A673 (cell line): ENCODE measurements at regions of chr1 and their contacts with region 1.

Region 1: GRCh38 chr1:27300341-27301051 is 21.5 kb upstream of the TMEM222 start:
- DNase-seq: peak; percentile 92
- H3K4me3 ChIP-seq: no peak overlapping the region
- H3K27ac ChIP-seq: no peak overlapping the region
- H3K4me1 ChIP-seq: peaks cover 4% of the 10 kb centered on the region
- H3K27me3 ChIP-seq: no peaks in the 10 kb centered on the region
- CTCF ChIP-seq: peak; percentile 96

Region 2: DNA sequence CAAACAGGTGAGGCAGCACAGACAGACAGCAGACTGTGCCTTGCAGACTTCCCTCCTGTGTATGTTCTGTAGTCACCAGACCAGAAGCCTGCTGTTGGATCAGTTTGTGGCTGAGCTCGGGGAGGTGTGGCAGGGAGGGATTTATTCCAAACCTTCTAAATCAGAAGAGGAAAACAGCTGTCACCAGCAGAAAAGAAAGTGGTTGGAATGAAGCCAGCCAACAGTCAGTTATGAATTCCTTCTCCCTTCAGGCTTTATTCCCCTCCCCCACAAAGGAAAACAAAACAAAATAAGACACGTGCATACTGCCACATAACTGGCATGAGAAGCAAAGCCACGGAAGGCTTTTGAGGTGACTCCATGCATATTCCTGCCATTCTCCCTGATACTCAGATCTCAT is 531.7 kb before region 1 on chr1:
- CTCF ChIA-PET with region 1: interaction called, 11 read pairs
- POLR2A ChIA-PET with region 1: no interaction called
- intact Hi-C with region 1: no loop called
- DNase-seq: peak; percentile 58
- H3K4me3 ChIP-seq: no peak overlapping the region
- H3K27ac ChIP-seq: peak overlapping the region; percentile 41
- H3K4me1 ChIP-seq: peaks cover 22% of the 10 kb centered on the region
- H3K27me3 ChIP-seq: no peaks in the 10 kb centered on the region
- CTCF ChIP-seq: no peak

Region 3: GRCh38 chr1:27102707-27103491 is 197.6 kb before region 1 on chr1:
- CTCF ChIA-PET with region 1: interaction called, 15 read pairs
- POLR2A ChIA-PET with region 1: no interaction called
- intact Hi-C with region 1: no loop called
- DNase-seq: peak; percentile 74
- H3K4me3 ChIP-seq: no peak overlapping the region
- H3K27ac ChIP-seq: no peak overlapping the region
- H3K4me1 ChIP-seq: peaks cover 16% of the 10 kb centered on the region
- H3K27me3 ChIP-seq: no peaks in the 10 kb centered on the region
- CTCF ChIP-seq: peak; percentile 96

Region 4: GRCh38 chr1:27341525-27342252 is 41.2 kb after region 1 on chr1 and contains the start of gene SYTL1:
- CTCF ChIA-PET with region 1: interaction called, 18 read pairs
- POLR2A ChIA-PET with region 1: no interaction called
- intact Hi-C with region 1: no loop called
- DNase-seq: peak; percentile 65
- H3K4me3 ChIP-seq: peak within 1 kb of the TSS; percentile 30
- H3K27ac ChIP-seq: peak within 1 kb of the TSS; percentile 19
- H3K4me1 ChIP-seq: peaks cover 12% of the 10 kb centered on the region
- H3K27me3 ChIP-seq: no peaks in the 10 kb centered on the region
- CTCF ChIP-seq: no peak
- total RNA-seq, gene SYTL1: 2.1 and 3.6 TPM in 2 replicates

Region 5: GRCh38 chr1:27392096-27392777 is 91.7 kb after region 1 on chr1 and contains the start of gene GPR3:
- CTCF ChIA-PET with region 1: interaction called, 21 read pairs
- POLR2A ChIA-PET with region 1: no interaction called
- intact Hi-C with region 1: loop called (anchors 2 kb)
- DNase-seq: peak; percentile 96
- H3K4me3 ChIP-seq: peak within 1 kb of the TSS; percentile 81
- H3K27ac ChIP-seq: peak within 1 kb of the TSS; percentile 80
- H3K4me1 ChIP-seq: peaks cover 12% of the 10 kb centered on the region
- H3K27me3 ChIP-seq: no peaks in the 10 kb centered on the region
- CTCF ChIP-seq: peak; percentile 82
- total RNA-seq, gene GPR3: 3.1 and 4.9 TPM in 2 replicates

Region 6: DNA sequence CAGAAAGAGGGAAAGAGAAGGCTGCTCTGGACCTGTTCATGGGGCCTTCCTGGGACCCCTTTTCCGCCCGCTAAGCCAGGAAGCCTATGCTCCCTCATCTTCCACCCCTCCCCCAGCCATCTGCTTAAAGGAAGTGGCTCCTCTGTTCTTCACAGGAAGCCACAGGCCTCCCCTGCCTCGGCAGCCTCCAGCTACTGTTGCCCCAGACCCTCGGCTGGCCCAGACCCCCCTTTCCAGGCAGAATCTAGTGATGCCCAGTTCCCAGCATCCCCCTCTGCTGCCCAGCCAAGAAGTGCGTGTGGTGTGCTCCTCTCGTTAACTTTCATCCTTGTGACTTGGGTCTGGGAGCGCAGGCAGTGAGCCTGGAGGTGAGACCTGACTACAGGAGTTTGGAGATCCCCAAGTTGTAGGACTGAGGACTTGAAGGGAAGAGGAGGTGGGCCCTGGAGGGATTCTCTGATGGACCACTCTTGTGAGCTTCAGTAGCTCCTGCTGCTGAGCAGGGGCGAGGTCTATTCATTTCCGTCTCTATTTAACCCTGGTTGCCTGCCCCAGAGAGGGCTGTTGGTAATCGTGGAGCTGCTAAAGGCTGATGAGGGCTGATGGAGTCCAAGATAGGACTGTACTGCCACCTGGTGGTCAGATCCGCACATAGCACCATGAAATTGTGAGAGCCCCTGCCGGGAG is 362.4 kb after region 1 on chr1:
- CTCF ChIA-PET with region 1: interaction called, 13 read pairs
- POLR2A ChIA-PET with region 1: no interaction called
- intact Hi-C with region 1: loop called (anchors 2 kb)
- DNase-seq: peak; percentile 89
- H3K4me3 ChIP-seq: no peak overlapping the region
- H3K27ac ChIP-seq: peak overlapping the region; percentile 4
- H3K4me1 ChIP-seq: peaks cover 3% of the 10 kb centered on the region
- H3K27me3 ChIP-seq: no peaks in the 10 kb centered on the region
- CTCF ChIP-seq: peak; percentile 88